MCF 10A (cell line): ENCODE measurements at regions of chr1 and their contacts with region 1.

Region 1: GRCh38 chr1:150925816-150926741 is at the start of gene SETDB1:
- DNase-seq: peak; percentile 99
- H3K4me3 Mint-ChIP-seq: peak within 1 kb of the TSS; percentile 98
- H3K27ac Mint-ChIP-seq: peak within 1 kb of the TSS; percentile 98
- H3K4me1 Mint-ChIP-seq: peaks cover 18% of the 10 kb centered on the region
- H3K27me3 Mint-ChIP-seq: no peaks in the 10 kb centered on the region
- CTCF ChIP-seq: no peak
- total RNA-seq, gene SETDB1: 67.4 and 69.4 TPM in 2 replicates

Region 2: GRCh38 chr1:150363426-150364230 is 562.5 kb before region 1 on chr1 and contains the start of gene RPRD2:
- CTCF ChIA-PET with region 1: no interaction called
- POLR2A ChIA-PET with region 1: no interaction called
- intact Hi-C with region 1: no loop called
- DNase-seq: peak; percentile 100
- H3K4me3 Mint-ChIP-seq: peak within 1 kb of the TSS; percentile 92
- H3K27ac Mint-ChIP-seq: peak within 1 kb of the TSS; percentile 97
- H3K4me1 Mint-ChIP-seq: peaks cover 19% of the 10 kb centered on the region
- H3K27me3 Mint-ChIP-seq: no peaks in the 10 kb centered on the region
- CTCF ChIP-seq: no peak
- total RNA-seq, gene RPRD2: 35.2 and 37.4 TPM in 2 replicates

Region 3: GRCh38 chr1:150813058-150813707 is 112.9 kb before region 1 on chr1:
- CTCF ChIA-PET with region 1: interaction called, 10 read pairs
- POLR2A ChIA-PET with region 1: interaction called, 3 read pairs
- intact Hi-C with region 1: no loop called
- DNase-seq: peak; percentile 74
- H3K4me3 Mint-ChIP-seq: no peak overlapping the region
- H3K27ac Mint-ChIP-seq: no peak overlapping the region
- H3K4me1 Mint-ChIP-seq: no peaks in the 10 kb centered on the region
- H3K27me3 Mint-ChIP-seq: no peaks in the 10 kb centered on the region
- CTCF ChIP-seq: peak; percentile 94

Region 4: GRCh38 chr1:150843474-150843873 is 82.6 kb before region 1 on chr1:
- CTCF ChIA-PET with region 1: interaction called, 11 read pairs
- POLR2A ChIA-PET with region 1: interaction called, 3 read pairs
- intact Hi-C with region 1: no loop called
- DNase-seq: no peak
- H3K4me3 Mint-ChIP-seq: no peak overlapping the region
- H3K27ac Mint-ChIP-seq: peak overlapping the region; percentile 42
- H3K4me1 Mint-ChIP-seq: no peaks in the 10 kb centered on the region
- H3K27me3 Mint-ChIP-seq: no peaks in the 10 kb centered on the region
- CTCF ChIP-seq: no peak

Region 5: DNA sequence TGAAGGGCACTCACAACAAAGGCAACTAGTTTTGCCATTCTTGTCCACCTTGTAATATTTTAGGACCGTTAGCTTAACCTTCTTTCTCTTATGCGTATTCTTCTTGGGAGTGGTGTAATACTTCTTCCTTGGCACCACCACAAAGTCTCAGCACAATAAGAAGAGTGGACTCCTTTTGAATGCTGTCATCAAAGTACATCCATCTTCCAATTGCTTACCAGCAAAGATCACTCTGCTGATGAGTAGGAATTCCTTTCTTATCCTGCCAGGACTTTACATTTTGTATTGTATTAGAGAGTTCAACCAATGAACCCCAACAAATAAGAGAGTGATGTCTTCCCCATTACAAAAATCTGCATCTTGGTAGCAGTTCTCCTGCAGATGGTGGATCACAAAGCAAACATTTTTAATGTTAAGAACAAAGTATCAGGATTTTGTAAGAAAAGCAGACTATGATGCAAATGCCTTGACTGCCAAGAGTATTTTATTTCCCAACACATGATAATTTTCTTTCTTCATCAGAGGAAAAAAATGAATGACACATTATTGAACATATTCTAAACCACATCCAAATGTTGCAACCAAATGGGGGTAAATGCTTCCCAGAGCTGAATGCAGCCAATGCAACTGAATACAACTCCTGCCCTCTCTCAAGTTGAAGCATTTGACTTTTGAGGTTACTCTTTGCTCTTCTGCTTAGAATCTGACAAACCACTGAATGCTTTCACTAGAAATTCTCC is 44.6 kb before region 1 on chr1:
- CTCF ChIA-PET with region 1: interaction called, 13 read pairs
- POLR2A ChIA-PET with region 1: interaction called, 36 read pairs
- intact Hi-C with region 1: loop called (anchors 1 kb)
- DNase-seq: peak; percentile 96
- H3K4me3 Mint-ChIP-seq: peak overlapping the region; percentile 43
- H3K27ac Mint-ChIP-seq: peak overlapping the region; percentile 77
- H3K4me1 Mint-ChIP-seq: peaks cover 27% of the 10 kb centered on the region
- H3K27me3 Mint-ChIP-seq: no peaks in the 10 kb centered on the region
- CTCF ChIP-seq: no peak

Region 6: GRCh38 chr1:150973826-150974579 is 47.9 kb after region 1 on chr1:
- CTCF ChIA-PET with region 1: interaction called, 5 read pairs
- POLR2A ChIA-PET with region 1: interaction called, 16 read pairs
- intact Hi-C with region 1: loop called (anchors 5 kb)
- DNase-seq: peak; percentile 48
- H3K4me3 Mint-ChIP-seq: peak overlapping the region; percentile 85
- H3K27ac Mint-ChIP-seq: peak overlapping the region; percentile 96
- H3K4me1 Mint-ChIP-seq: peaks cover 43% of the 10 kb centered on the region
- H3K27me3 Mint-ChIP-seq: no peaks in the 10 kb centered on the region
- CTCF ChIP-seq: no peak

Region 7: GRCh38 chr1:151008190-151008860 is 82.2 kb after region 1 on chr1 and contains the start of gene PRUNE1:
- CTCF ChIA-PET with region 1: interaction called, 13 read pairs
- POLR2A ChIA-PET with region 1: interaction called, 18 read pairs
- intact Hi-C with region 1: no loop called
- DNase-seq: peak; percentile 97
- H3K4me3 Mint-ChIP-seq: peak within 1 kb of the TSS; percentile 94
- H3K27ac Mint-ChIP-seq: peak within 1 kb of the TSS; percentile 99
- H3K4me1 Mint-ChIP-seq: peaks cover 35% of the 10 kb centered on the region
- H3K27me3 Mint-ChIP-seq: no peaks in the 10 kb centered on the region
- CTCF ChIP-seq: no peak
- total RNA-seq, gene PRUNE1: 17.6 and 24.1 TPM in 2 replicates

Region 8: DNA sequence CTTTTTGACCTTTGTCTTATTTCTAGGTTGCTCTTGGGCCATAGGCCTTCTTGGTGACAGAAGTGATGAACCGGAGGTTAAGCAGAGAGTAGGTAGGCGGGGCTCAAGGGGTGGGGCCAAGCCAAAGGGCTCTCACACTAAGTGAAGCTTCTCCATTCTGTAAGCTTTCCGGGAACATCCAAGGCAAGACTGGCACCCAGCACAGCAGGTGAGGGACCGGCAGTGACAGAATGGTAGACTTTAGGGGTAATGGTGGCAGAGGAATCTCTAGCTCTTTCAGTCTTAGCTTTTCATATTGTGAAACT is 230.4 kb after region 1 on chr1 and contains the start of gene TNFAIP8L2:
- CTCF ChIA-PET with region 1: no interaction called
- POLR2A ChIA-PET with region 1: no interaction called
- intact Hi-C with region 1: no loop called
- DNase-seq: no peak
- H3K4me3 Mint-ChIP-seq: no peak within 1 kb of the TSS
- H3K27ac Mint-ChIP-seq: no peak within 1 kb of the TSS
- H3K4me1 Mint-ChIP-seq: peaks cover 12% of the 10 kb centered on the region
- H3K27me3 Mint-ChIP-seq: no peaks in the 10 kb centered on the region
- CTCF ChIP-seq: no peak
- total RNA-seq, gene TNFAIP8L2: not detected in 2 replicates